ENCODE measurements at regions of chr2 and their contacts with region 1.

Region 1: DNA sequence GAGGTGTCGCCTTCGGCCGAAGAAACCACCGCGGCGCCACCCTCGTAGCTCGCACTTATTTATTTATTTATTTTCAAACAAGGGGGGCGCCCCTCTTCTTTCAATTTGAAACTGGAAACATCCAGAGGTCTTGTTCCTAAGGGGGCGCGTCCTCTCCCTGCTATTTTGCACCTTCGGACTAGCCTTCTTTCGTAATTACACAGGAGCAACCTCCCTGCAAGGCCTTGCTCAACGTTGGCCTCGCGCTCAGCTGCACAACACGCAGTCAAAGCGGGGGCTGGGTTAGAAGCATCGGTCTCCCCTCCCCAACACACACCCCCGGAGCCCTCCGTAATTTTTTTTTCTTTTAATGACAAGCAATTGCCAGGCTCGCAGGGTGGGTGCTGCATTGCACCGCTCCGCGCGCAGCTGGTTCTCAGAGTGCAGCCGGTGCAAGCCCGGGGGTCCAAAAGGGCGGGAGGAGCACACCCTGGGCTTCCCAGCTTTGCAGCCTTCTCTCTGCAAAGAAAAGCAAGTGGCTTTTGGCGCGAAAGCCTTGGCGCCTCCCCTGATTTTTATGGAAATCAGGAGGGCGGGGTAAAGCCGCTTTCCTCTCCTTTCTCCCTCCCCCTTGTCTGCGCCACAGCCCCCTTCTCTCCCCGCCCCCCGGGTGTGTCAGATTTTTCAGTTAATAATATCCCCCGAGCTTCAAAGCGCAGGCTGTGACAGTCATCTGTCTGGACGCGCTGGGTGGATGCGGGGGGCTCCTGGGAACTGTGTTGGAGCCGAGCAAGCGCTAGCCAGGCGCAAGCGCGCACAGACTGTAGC is at the start of gene MYCN:
- DNase-seq: no peak
- H3K4me3 ChIP-seq: peak within 1 kb of the TSS; percentile 20 to 68 (median 48)
- H3K27ac ChIP-seq: no peak within 1 kb of the TSS
- H3K4me1 ChIP-seq: peaks cover 32 to 50% (median 39%) of the 10 kb centered on the region in 3 donors
- H3K27me3 ChIP-seq: peaks cover 0 to 55% (median 12%) of the 10 kb centered on the region in 4 donors
- CTCF ChIP-seq: peak in 4 of 6 experiments; percentile 4 to 77 (median 65)
- POLR2A ChIP-seq: no peak
- total RNA-seq, gene MYCN: 0.21 to 0.95 (median 0.33) TPM

Region 2: GRCh38 chr2:15640261-15640711 is 299.8 kb before region 1 on chr2:
- intact Hi-C with region 1: loop called (anchors 10 kb)
- DNase-seq: no peak
- H3K4me3 ChIP-seq: no peak overlapping the region
- H3K27ac ChIP-seq: no peak overlapping the region
- H3K4me1 ChIP-seq: peaks cover 0 to 23% (median 3%) of the 10 kb centered on the region in 3 donors
- H3K27me3 ChIP-seq: no peaks in the 10 kb centered on the region
- CTCF ChIP-seq: no peak
- POLR2A ChIP-seq: no peak

Region 3: DNA sequence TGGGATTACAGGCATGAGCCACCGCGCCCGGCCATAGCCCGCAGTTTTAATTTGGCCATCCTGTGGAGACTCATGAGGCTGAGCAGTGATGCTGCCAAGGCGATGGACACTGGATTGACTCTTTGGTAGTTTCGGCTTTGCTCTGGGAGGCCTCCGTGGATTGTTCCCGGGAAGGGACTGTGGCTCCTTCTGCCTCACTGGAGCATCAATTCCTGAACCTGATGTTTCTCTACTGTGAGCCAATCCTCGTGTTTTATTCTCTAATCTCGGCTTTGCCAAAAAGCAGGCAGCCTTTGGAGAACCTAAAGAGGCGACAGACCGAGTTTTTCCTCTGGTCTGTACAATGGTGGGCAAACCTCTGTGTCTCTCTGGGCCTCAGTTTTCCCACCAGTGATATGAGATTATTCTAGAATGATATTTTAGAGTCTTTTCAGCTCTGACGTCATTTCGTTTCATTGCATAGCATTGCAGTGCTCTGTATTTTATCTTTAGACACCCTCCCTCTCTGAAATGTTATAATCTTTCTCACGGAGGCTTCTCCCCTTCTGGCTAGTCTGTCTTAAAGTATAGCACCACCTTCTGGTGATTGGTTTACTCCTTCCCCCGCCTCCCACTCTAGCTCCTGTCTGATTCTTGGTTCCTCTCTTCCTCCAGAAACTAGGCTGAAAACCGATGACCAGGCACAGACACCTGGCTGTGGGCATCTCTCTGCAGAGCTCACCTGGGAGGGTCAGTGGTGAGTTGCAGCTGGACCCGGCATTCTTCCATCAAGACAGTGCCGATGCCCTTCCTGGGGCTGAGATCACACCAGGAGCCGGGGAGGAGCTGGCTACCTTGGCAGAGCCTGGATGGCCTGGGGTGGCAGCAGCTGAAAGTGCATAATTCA is 341.6 kb after region 1 on chr2:
- intact Hi-C with region 1: loop called (anchors 10 kb)
- DNase-seq: no peak
- H3K4me3 ChIP-seq: no peak overlapping the region
- H3K27ac ChIP-seq: no peak overlapping the region
- H3K4me1 ChIP-seq: peaks cover 0 to 4% (median 0%) of the 10 kb centered on the region in 3 donors
- H3K27me3 ChIP-seq: no peaks in the 10 kb centered on the region
- CTCF ChIP-seq: peak in 5 of 6 experiments; percentile 31 to 56 (median 43)
- POLR2A ChIP-seq: no peak

Region 4: DNA sequence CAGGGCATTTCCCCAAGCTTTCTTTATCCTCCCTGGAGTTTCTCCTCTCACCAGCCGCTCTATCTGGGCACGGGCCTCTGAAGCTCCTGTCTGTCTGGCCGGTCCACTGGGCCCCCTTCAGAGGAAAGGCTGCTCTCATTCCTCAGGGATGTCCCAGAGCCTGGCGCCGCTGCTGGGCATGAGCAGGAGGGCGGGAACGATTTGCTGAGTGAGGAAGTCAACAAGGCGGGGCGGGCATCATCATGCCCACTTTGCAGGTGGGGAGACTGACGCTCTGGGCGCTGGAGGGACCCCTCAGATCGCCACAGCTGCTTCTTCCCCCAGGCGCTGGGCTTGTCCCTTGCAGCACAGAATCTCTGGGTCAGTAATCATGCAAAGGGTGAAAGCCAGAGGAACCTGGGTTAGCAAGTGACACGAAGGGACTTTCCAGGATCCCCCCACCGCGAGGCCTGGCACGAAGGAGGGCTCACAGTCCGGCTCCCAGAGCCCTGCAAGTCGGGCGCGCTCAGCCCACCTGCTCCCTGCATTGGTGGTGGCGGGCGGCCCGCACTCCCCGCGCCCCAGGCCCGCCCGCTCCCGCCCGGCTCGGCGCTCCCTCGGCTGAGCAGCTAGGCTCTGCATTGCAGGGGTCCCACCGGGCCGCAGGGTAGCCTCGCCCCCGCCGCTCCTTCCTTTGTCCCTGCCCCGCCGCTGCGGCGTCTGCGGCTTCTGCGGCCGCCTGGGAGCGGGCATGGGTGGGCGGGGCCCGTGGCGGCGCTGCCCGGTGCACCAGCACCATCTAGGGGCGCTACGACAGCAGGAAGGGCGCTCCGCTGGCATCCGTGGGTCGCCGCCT is 567.8 kb after region 1 on chr2:
- intact Hi-C with region 1: loop called (anchors 10 kb)
- DNase-seq: no peak
- H3K4me3 ChIP-seq: peak overlapping the region in 3 of 4 donors; percentile 30 to 63 (median 43)
- H3K27ac ChIP-seq: no peak overlapping the region
- H3K4me1 ChIP-seq: peaks cover 8 to 12% (median 9%) of the 10 kb centered on the region in 3 donors
- H3K27me3 ChIP-seq: peaks cover 0 to 58% (median 5%) of the 10 kb centered on the region in 4 donors
- CTCF ChIP-seq: peak in 5 of 6 experiments; percentile 42 to 73 (median 51)
- POLR2A ChIP-seq: no peak

Measured in esophagus squamous epithelium (tissue), 5 donors.